MCF 10A (cell line): ENCODE measurements at regions of chr2 and their contacts with region 1.

Region 1: DNA sequence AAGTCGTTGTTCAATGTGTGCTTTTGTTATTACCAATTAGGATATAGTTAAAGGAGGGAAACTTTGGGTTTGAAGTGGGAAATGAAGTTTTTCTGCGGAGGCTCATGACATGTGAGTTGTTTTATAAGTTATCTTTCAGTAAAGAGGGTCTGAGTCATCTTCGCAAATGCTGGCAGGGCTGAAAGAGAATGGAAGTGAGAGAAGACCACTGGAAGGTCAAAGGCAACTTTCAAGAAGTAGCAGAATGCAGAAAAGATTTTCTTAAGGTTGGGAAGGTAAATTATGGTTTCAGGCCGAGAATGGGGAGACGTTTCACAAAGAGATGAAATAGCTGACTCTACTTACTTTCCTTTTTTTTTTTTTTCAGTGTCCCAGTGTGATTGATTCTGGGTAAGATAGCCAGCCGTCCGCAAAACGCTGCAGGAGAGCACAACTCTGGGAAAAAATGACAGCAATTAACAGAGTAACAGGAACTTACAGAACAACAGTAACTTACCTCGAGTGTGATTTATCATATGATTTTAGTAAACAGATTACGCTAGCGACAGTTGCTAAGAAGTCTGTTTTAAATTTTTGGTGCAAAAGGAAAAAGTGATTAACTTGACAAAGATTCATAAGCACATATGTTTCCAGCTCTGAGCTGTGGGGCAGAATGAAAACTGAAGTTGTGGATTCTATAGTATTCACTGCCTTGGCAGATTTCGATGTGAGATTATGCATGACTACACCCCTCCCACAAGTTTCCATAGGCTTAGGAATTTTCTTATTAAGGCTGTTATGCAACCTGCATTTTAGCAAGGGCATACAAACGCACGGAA is 46.8 kb upstream of the ACTR3 start:
- DNase-seq: peak; percentile 81
- H3K4me3 Mint-ChIP-seq: peak overlapping the region; percentile 0
- H3K27ac Mint-ChIP-seq: peak overlapping the region; percentile 43
- H3K4me1 Mint-ChIP-seq: peaks cover 12% of the 10 kb centered on the region
- H3K27me3 Mint-ChIP-seq: no peaks in the 10 kb centered on the region
- CTCF ChIP-seq: no peak

Region 2: DNA sequence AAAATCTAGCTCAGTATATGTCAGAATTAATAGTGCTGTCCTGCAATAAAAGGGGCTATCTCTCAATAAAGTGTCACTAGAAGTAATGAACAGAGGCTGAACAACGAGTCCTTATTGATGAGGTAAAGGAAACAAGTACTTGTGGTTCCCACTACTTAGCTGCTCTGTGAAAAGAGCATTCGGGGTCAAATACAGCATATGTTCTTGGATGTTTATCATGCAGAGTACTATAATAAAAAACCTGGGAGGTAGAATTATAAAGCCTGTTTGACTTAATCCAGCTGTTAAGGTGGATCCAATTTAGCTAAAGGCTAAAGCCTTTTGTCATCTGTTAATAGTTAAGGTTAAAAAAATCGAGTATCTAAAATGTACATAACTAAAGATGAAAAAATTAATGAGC is 119.1 kb before region 1 on chr2:
- CTCF ChIA-PET with region 1: no interaction called
- POLR2A ChIA-PET with region 1: no interaction called
- intact Hi-C with region 1: no loop called
- DNase-seq: no peak
- H3K4me3 Mint-ChIP-seq: no peak overlapping the region
- H3K27ac Mint-ChIP-seq: no peak overlapping the region
- H3K4me1 Mint-ChIP-seq: no peaks in the 10 kb centered on the region
- H3K27me3 Mint-ChIP-seq: no peaks in the 10 kb centered on the region
- CTCF ChIP-seq: no peak

Region 3: DNA sequence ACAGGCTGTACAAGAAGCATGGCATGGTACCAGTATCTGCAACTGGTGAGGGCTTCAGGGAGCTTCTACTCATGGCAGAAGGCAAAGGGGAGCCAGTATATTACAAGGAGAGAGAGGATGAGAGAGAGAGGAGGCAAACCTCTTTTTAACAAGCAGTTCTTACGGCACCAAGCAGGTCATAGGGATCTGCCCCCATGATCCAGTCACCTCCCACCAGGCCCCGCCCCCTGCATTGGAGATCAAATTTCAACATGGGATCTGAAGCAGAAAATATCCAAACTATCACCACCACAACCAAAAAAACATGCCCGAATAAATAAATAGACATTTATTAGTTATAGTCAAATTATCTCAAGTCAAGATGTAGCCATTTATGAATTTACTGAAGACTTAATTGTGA is 72.2 kb before region 1 on chr2:
- CTCF ChIA-PET with region 1: no interaction called
- POLR2A ChIA-PET with region 1: no interaction called
- intact Hi-C with region 1: no loop called
- DNase-seq: no peak
- H3K4me3 Mint-ChIP-seq: no peak overlapping the region
- H3K27ac Mint-ChIP-seq: no peak overlapping the region
- H3K4me1 Mint-ChIP-seq: no peaks in the 10 kb centered on the region
- H3K27me3 Mint-ChIP-seq: no peaks in the 10 kb centered on the region
- CTCF ChIP-seq: no peak

Region 4: GRCh38 chr2:113858764-113859163 is 15.6 kb after region 1 on chr2:
- CTCF ChIA-PET with region 1: interaction called, 4 read pairs
- POLR2A ChIA-PET with region 1: interaction called, 12 read pairs
- intact Hi-C with region 1: no loop called
- DNase-seq: peak; percentile 63
- H3K4me3 Mint-ChIP-seq: no peak overlapping the region
- H3K27ac Mint-ChIP-seq: no peak overlapping the region
- H3K4me1 Mint-ChIP-seq: peaks cover 7% of the 10 kb centered on the region
- H3K27me3 Mint-ChIP-seq: no peaks in the 10 kb centered on the region
- CTCF ChIP-seq: no peak

Region 5: DNA sequence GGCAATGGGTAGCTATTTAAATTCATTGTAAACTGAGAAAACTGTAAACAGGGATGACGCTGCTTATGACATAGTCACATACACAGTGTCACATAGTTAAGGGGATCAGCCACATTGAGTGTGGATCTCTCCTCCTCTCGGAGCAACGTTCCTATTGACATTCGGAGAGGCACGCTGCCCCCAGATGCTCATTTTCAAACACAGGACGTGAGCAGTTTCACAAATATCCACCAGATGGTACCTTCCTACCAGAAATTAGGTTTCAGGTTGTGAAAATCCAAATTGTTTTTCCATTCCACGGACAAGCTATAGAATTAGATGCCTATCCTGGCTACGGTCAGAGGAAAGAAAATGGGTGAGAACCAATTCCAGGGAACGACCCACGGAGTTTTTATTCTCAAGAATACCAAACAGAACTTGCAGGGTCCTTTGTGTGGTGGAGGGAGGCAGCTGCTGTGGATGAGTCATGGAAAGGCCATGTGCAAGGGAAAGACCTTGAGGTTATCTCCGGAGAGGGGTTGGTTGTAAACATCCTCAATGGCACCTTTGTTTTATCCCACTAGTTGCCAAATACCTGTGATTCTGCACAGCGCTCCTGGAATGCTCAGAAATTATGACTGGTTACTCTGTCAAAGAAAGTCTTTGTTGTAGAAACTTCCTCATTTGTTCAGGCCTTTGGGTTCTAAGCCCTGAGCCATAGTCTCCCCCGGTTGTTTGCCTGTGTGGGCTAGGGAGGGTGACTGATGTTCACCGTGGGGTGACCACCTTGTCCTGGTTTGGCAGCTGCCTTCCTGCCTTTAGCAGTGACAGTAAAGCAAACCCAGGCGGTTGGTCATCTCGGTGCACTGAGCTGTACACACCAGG is 134.8 kb after region 1 on chr2:
- CTCF ChIA-PET with region 1: no interaction called
- POLR2A ChIA-PET with region 1: no interaction called
- intact Hi-C with region 1: no loop called
- DNase-seq: peak; percentile 29
- H3K4me3 Mint-ChIP-seq: no peak overlapping the region
- H3K27ac Mint-ChIP-seq: no peak overlapping the region
- H3K4me1 Mint-ChIP-seq: peaks cover 6% of the 10 kb centered on the region
- H3K27me3 Mint-ChIP-seq: no peaks in the 10 kb centered on the region
- CTCF ChIP-seq: peak; percentile 46

Region 6: DNA sequence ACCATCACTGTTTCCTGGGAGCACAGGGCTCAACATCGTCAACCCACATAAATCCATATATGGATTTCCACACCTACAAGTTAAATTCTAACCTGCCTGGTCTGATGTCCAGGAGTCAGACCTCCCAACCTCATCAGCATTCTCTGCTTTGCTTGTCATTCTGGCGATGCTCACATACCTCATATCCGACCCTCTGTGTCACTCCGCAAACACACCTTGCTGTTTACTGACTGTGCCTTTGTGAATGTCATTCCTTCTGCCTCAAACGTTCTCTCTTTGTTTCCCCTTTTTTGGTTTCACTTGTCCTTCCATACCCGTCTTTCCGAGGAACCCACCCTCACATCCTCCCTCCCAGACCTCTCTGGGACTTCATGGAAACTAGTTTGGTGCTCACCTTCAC is 233.8 kb after region 1 on chr2:
- CTCF ChIA-PET with region 1: no interaction called
- POLR2A ChIA-PET with region 1: no interaction called
- intact Hi-C with region 1: no loop called
- DNase-seq: no peak
- H3K4me3 Mint-ChIP-seq: no peak overlapping the region
- H3K27ac Mint-ChIP-seq: no peak overlapping the region
- H3K4me1 Mint-ChIP-seq: peaks cover 6% of the 10 kb centered on the region
- H3K27me3 Mint-ChIP-seq: peaks cover 59% of the 10 kb centered on the region
- CTCF ChIP-seq: no peak